ENCODE measurements at regions of chr16 and their contacts with region 1.

Region 1: GRCh38 chr16:68528686-68529379 is 10.3 kb upstream of the ZFP90 start:
- DNase-seq: peak; percentile 18
- H3K4me3 ChIP-seq: peak overlapping the region in 3 of 4 donors; percentile 15 to 54 (median 24)
- H3K27ac ChIP-seq: no peak overlapping the region
- H3K4me1 ChIP-seq: peaks cover 11 to 27% (median 17%) of the 10 kb centered on the region in 3 donors
- H3K27me3 ChIP-seq: peaks cover 0 to 4% (median 0%) of the 10 kb centered on the region in 4 donors
- CTCF ChIP-seq: peak; percentile 85 to 98 (median 97)
- POLR2A ChIP-seq: no peak

Region 2: GRCh38 chr16:68351962-68352431 is 176.8 kb before region 1 on chr16:
- intact Hi-C with region 1: no loop called
- DNase-seq: no peak
- H3K4me3 ChIP-seq: no peak overlapping the region
- H3K27ac ChIP-seq: no peak overlapping the region
- H3K4me1 ChIP-seq: peaks cover 0 to 14% (median 0%) of the 10 kb centered on the region in 3 donors
- H3K27me3 ChIP-seq: no peaks in the 10 kb centered on the region
- CTCF ChIP-seq: no peak
- POLR2A ChIP-seq: no peak

Region 3: GRCh38 chr16:68839831-68840230 is 311.0 kb after region 1 on chr16:
- intact Hi-C with region 1: loop called (anchors 10 kb)
- DNase-seq: no peak
- H3K4me3 ChIP-seq: no peak overlapping the region
- H3K27ac ChIP-seq: no peak overlapping the region
- H3K4me1 ChIP-seq: peaks cover 0 to 14% (median 4%) of the 10 kb centered on the region in 3 donors
- H3K27me3 ChIP-seq: no peaks in the 10 kb centered on the region
- CTCF ChIP-seq: no peak
- POLR2A ChIP-seq: no peak

Region 4: DNA sequence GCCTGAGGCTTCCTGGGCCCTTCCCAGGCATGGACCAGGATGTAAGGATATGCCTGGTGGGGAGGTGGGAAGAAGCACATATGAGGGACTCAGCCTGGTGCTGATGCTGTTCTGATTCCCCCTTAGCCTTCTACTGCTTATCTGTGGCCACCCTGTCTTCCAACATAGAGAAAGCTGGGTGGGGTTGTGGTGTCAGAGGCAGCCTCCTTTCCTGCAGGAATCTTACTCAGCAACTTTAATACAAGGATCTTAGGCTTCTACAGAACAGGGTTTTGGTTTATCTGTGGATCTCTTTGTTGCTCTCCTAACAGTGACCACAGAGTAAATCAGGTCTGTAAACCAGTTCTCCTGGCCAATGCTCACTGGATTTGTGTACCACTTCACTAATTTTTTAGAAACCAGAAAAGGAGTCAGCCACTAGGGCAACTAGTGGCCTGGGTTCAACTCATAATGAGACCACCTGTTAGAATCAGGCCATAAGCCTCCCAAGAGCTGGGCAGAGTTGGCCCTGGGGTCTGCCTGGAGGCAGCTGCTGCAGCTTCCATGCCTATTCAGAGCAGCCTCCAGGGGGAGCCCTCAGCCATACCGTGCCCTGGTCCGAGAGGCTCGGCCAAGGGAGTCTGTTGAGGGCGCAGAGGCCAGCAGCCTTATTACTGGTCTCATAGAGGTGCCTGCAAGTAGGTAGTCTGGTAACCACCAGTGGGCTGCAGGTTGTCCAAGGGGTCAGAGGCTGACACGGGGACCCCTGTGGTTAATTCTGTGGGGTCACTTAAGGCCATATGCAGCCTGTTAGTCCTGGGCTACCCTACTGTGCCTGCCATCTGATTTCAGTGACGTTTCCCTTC is 583.7 kb after region 1 on chr16:
- intact Hi-C with region 1: loop called (anchors 10 kb)
- DNase-seq: no peak
- H3K4me3 ChIP-seq: no peak overlapping the region
- H3K27ac ChIP-seq: peak overlapping the region in 3 of 4 donors; percentile 18 to 21 (median 19)
- H3K4me1 ChIP-seq: peaks cover 11 to 66% (median 41%) of the 10 kb centered on the region in 3 donors
- H3K27me3 ChIP-seq: peaks cover 0 to 9% (median 0%) of the 10 kb centered on the region in 4 donors
- CTCF ChIP-seq: peak in 4 of 6 experiments; percentile 14 to 72 (median 50)
- POLR2A ChIP-seq: no peak

Measured in esophagus squamous epithelium (tissue), 5 donors.